Activated CD4-positive, alpha-beta memory T cell treated with anti-CD3 and anti-CD28 coated beads, Interleukin-2, amount 10 ng/mL, durations not matched to agents 7 days and 5 days (primary cell): ENCODE measurements at regions of chr14 and their contacts with region 1.

Region 1: GRCh38 chr14:22570132-22570949 is 18.7 kb downstream of the DAD1 start:
- DNase-seq: peak; percentile 91
- H3K4me3 Mint-ChIP-seq: peak overlapping the region; percentile 82
- H3K27ac Mint-ChIP-seq: peak overlapping the region; percentile 95
- H3K4me1 Mint-ChIP-seq: peaks cover 70% of the 10 kb centered on the region
- H3K27me3 Mint-ChIP-seq: no peaks in the 10 kb centered on the region

Region 2: DNA sequence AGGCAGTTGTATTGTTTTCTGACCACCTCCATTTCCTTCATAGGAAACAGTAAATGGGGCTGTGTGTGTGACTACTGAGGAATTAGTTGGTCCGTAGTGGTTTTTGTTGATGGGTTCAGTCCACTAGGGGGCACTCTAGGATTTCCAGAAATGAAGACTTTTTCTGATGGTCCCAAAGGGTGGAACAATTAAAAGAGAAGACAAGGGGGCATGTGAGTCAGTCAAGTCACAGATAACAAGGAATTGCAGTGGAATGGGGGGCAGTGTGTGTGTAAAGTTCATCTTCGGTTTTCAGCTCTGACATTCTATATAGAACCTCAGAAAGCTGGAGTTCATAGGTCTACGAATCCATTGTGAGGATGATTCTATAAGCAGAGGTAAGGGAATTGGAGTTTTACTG is 710.2 kb before region 1 on chr14:
- CTCF ChIA-PET with region 1: interaction called, 12 read pairs
- POLR2A ChIA-PET with region 1: interaction called, 3 read pairs
- DNase-seq: peak; percentile 51
- H3K4me3 Mint-ChIP-seq: peak overlapping the region; percentile 51
- H3K27ac Mint-ChIP-seq: peak overlapping the region; percentile 24
- H3K4me1 Mint-ChIP-seq: peaks cover 9% of the 10 kb centered on the region
- H3K27me3 Mint-ChIP-seq: peaks cover 14% of the 10 kb centered on the region

Region 3: GRCh38 chr14:21997300-21997699 is 573.0 kb before region 1 on chr14:
- CTCF ChIA-PET with region 1: interaction called, 10 read pairs
- POLR2A ChIA-PET with region 1: interaction called, 15 read pairs
- DNase-seq: peak; percentile 57
- H3K4me3 Mint-ChIP-seq: peak overlapping the region; percentile 82
- H3K27ac Mint-ChIP-seq: peak overlapping the region; percentile 85
- H3K4me1 Mint-ChIP-seq: peaks cover 27% of the 10 kb centered on the region
- H3K27me3 Mint-ChIP-seq: peaks cover 2% of the 10 kb centered on the region

Region 4: GRCh38 chr14:22276913-22277816 is 293.2 kb before region 1 on chr14:
- CTCF ChIA-PET with region 1: no interaction called
- POLR2A ChIA-PET with region 1: no interaction called
- DNase-seq: no peak
- H3K4me3 Mint-ChIP-seq: no peak overlapping the region
- H3K27ac Mint-ChIP-seq: no peak overlapping the region
- H3K4me1 Mint-ChIP-seq: no peaks in the 10 kb centered on the region
- H3K27me3 Mint-ChIP-seq: no peaks in the 10 kb centered on the region

Region 5: DNA sequence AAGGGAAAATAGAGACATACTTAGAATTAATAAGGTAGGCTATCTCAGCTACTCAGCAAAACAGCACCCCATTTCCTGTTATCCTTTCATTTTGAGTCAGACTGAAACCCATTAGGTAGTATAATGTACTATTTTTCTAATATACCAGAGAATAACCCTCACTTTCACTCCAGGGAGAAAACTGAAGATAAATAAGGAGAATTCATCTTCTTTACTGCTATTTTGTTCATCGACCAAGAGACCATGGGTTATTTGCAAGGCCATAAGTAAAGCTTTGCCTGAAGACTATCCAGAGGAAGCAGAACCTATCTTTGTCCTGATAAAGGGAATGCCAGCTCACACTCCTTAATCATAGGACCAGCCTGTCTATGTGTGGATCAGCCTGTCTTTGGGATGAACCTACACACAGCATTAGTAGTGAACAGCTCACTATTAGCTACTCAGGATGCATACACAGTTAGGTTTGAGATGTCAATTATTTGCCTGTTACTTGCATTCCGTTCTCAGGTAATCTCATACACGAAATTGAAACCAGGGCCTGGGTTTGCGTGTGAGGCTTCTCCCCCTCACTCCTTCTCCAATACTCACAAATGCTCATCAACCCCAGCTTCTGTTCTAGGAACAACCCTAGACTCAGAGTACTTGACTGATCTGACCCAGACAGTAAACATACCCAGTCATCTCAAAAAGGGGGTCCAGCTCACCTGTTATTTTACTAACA is 105.8 kb before region 1 on chr14:
- CTCF ChIA-PET with region 1: no interaction called
- POLR2A ChIA-PET with region 1: no interaction called
- DNase-seq: no peak
- H3K4me3 Mint-ChIP-seq: no peak overlapping the region
- H3K27ac Mint-ChIP-seq: no peak overlapping the region
- H3K4me1 Mint-ChIP-seq: no peaks in the 10 kb centered on the region
- H3K27me3 Mint-ChIP-seq: no peaks in the 10 kb centered on the region

Region 6: DNA sequence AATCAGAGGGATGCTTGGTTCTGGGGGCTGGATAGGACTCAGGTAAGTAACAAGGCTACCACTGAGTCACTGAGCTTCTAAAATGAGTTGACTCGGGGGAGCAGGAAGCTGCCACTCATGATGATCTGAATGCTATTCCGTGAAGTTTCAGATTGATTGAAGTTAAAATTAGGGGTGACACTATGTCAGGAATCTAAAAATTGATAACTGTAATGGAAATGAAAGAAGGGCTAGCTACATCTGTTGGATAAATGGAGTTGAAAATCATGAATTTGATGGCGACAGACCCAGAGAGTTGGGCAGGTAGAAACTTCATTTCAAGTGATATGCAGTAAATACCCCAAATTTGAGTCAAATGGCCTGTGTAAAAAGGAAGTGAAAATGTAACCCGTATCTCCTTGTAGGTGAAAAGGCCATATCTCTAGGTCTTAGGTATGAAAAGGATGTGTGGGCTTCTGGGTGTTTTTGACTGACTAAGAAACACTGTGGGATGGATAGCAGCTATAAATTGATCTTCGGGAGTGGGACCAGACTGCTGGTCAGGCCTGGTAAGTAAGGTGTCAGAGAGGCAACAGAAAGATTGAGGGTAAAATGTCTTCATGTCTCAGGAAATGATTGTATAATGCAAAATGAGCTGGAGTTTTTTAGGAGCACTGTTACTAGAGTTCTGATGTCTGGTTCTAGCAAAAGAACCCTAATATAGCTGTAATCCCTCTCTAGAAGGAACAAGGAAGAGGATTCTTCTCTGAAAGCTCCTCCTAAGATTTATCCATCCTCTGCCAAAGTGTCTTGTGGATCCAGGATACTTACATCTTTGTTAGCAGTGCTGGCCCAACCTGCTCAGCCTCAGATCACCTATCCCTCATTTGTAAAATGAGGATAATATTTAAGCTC is 38.6 kb before region 1 on chr14:
- CTCF ChIA-PET with region 1: interaction called, 26 read pairs
- POLR2A ChIA-PET with region 1: interaction called, 288 read pairs
- DNase-seq: no peak
- H3K4me3 Mint-ChIP-seq: peak overlapping the region; percentile 82
- H3K27ac Mint-ChIP-seq: peak overlapping the region; percentile 96
- H3K4me1 Mint-ChIP-seq: peaks cover 90% of the 10 kb centered on the region
- H3K27me3 Mint-ChIP-seq: no peaks in the 10 kb centered on the region

Region 7: DNA sequence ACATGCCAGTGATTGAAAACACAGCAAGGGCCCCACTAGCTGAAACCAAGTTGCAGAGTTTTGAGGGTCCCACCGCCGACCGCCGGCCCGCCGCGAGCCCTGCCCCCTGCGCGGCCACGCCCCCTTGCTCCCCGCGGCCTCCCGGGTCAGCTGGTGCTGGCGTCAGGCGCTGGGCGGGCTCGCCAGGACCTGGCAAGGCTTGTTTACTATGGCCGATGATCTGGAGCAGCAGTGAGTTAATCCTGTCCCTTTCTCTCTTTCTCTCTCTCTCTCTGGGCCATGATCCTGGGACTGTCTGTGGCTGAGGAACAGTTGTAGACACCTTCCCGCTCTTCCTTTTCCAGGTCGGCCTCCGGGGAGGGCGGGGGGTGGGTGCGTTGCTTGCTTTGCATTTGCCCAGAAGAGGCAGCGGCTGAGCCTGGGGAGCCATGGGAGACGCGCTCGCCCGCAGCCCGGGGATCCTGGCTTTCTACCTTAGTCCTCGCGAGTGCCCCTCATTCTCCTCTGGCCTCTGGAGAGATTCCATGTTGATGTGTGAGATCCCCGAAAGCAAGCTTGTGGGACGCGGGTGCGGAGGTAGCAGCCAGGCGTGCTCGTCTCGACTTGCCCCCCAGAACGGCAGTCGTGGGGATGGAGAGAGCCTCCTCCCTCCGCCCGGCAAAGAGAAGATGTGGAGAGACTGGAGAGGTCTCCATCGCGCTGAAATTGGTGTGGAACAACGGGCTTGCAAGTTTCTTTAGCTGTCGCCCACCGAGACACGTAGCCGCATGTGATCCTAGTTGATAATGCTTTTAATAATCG is 28.0 kb after region 1 on chr14 and contains the start of gene ABHD4:
- CTCF ChIA-PET with region 1: interaction called, 41 read pairs
- POLR2A ChIA-PET with region 1: interaction called, 3 read pairs
- DNase-seq: peak; percentile 79
- H3K4me3 Mint-ChIP-seq: peak within 1 kb of the TSS; percentile 88
- H3K27ac Mint-ChIP-seq: peak within 1 kb of the TSS; percentile 69
- H3K4me1 Mint-ChIP-seq: peaks cover 25% of the 10 kb centered on the region
- H3K27me3 Mint-ChIP-seq: peaks cover 14% of the 10 kb centered on the region
- total RNA-seq, gene ABHD4: 16.7 to 20.7 TPM

Region 8: DNA sequence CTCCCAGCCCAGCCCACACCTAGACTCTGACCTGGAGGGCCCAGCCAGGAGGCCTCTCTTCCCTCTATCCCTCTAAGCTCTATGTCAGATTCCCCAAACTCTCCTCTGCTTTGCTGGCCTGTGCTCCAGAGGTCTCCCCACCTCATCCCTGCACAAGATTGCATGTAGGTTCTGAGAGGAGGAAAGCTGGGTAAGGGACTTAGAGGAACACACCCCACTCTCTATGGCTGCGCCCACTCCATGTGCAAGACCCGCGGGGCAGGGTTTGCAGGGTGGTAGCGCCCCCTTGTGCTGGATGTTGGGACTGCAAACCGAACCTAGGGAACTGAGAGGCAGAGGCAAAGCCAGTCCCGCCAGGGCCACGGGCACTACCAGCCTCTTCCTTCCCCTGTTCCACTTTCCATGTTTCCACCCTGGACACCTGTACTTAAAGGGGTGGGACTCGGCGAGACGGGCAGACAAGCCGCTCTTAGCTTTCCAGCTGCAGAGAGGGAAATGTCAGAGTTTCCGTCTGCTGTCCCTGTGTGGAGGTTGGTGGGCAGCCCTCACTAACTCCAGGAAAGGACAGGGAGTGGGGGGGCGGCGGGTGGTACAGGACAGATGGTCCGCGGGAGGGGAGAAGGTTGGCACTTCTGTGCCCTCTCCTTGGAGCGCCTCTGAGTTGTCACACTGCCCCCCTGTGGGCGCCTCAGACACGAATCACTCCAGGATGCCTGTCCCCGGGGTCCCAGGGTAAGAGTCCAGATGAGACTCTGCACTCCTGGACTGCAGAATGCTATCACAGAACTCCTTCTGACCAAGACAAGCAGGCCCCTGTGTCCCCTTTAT is 282.8 kb after region 1 on chr14:
- CTCF ChIA-PET with region 1: interaction called, 97 read pairs
- POLR2A ChIA-PET with region 1: interaction called, 16 read pairs
- DNase-seq: peak; percentile 90
- H3K4me3 Mint-ChIP-seq: peak overlapping the region; percentile 68
- H3K27ac Mint-ChIP-seq: peak overlapping the region; percentile 44
- H3K4me1 Mint-ChIP-seq: peaks cover 46% of the 10 kb centered on the region
- H3K27me3 Mint-ChIP-seq: peaks cover 23% of the 10 kb centered on the region

Region 9: DNA sequence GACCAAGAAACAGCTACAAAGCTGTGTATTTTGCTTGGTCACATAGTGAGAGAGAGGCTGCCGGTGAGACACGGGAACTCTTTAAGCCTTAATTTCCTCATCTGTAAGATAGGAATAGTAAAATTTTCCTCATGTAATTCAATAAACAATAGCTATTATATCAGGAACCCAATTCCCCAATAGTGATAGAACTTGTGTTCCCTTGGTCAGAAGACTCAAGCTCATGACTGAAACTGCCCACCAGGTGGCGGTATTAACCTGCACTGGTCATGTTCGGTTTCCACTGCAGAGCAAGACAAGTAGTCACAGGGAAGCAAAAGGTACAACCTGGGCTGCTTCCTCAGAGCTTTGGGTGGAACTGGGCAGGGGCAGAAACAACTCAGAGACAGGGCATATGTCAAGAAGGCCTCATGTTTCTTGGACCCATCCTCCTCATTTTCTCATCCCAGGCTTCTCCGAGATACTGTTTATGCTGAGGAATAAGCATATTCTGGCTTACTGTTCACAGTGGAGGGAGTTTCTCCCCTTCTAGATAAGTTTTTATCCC is 416.2 kb after region 1 on chr14:
- CTCF ChIA-PET with region 1: interaction called, 13 read pairs
- POLR2A ChIA-PET with region 1: interaction called, 4 read pairs
- DNase-seq: peak; percentile 90
- H3K4me3 Mint-ChIP-seq: no peak overlapping the region
- H3K27ac Mint-ChIP-seq: no peak overlapping the region
- H3K4me1 Mint-ChIP-seq: peaks cover 2% of the 10 kb centered on the region
- H3K27me3 Mint-ChIP-seq: no peaks in the 10 kb centered on the region